ENCODE measurements at regions of chrX and their contacts with region 1.

Region 1: DNA sequence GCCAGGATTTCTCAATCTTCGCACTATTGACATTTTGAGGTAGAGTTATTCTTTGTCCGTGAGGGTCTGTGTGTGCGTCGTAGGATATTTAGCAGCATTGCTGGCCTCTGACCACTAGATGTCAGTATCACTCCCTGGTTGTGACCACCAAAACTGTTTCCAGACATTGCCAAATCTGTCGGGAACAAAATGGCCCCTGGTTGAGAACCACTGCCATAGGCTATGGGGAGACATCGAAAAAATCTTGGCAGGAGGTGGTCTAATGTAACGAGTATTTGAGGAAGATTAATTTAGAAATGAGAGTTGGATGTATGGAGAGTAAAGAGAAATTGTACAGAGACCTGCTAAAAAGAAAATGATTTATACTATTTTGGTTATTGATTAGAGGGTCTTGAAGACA is 108.4 kb downstream of the DOCK11 start:
- DNase-seq: no peak

Region 2: DNA sequence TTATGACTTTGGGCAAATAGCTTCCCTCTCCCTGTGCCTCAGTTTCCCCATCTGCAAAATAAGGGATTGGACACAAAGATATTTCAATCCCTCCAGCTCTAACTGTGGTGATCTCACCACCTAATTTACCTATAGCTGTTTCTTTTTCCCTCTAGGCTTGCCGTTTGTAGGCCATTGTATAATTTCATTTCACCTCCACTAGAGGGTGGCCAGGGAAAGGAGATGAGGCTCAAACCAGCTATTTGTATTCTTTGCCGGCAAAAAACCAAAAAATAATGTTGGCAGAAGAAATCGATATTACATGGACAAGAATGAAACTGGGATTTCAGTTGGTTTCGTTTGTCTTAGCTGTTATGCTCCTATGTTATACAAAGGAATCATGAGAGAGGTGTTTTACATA is 144.5 kb before region 1 on chrX:
- intact Hi-C with region 1: loop called (anchors 5 kb)
- DNase-seq: no peak

Region 3: DNA sequence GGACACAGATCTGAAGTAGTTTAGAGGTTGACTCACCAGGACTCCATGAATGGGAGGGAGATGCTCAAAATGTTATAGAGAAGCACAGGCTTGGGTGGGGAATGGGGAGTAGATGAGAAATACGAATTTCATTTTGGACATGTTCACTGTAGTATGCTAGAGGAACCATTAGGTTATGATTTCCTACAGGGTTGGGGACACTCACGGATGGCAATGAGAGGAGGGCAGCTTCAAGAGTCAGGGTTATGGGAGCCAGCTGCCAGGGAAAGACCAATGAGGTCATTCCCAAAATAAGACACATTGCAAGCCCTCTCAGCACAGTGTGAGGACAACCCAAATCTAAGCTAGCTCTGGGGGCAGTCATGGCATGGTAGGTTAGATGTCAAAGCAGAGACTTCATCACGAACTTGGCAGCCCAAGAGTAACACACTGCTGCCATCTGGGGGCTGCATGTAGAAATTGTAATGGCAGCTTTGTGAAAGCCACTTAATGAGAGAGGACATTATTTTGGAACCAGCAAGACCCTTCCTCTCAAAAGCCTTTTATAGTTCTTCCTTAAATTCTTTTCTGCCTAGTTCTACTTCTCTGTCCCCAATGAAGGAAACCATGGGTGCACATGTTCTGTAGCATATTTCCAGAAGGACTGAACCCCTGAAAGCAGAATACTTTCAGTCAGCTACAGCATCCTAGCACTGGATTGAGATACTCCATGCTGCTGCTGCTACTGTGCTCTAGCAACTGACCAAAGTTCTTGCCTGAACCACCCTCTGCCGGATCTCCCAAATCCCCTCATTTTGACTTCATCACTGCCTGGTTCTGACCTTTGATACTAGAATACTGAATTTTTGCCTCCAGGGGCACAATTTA is 203.4 kb after region 1 on chrX:
- intact Hi-C with region 1: no loop called
- DNase-seq: no peak

Measured in cardiac septum (tissue), 1 donor.